Activated T-helper 1 cell treated with anti-CD3 and anti-CD28 coated beads, Interleukin-12 subunit alpha, Interleukin-12 subunit beta, Interleukin-2, Interleukin-4 antibody, amounts not matched to agents 30 ng/mL and 10 ng/mL and 1 ng/mL, durations not matched to agents 14 hours and 24 hours and 36 hours (primary cell): ENCODE measurements at regions of chr3 and their contacts with region 1.

Region 1: DNA sequence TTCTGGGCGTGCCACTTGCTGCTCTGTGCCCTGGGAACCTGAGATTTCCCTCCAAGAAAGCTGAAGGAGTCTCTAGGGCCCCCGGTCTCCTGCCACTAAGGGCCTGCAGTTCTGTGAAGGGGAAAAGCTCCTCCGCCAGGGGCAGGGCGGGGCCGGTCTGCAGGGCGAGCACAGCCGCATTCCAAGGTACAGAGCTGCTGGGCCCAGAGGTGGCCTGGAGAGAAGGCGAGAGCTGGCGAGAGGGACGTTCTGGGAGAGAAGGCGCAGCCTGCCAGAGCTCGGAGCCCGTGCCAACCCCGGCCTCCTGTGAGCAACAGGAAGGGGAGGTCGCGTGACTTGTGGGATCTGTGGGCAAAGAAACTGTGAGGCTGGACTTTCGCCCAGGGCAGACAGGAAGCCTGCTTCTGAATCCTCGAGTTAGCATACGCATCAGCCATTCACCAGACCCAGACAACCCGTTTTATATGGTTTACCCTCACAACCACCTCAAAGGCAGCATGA is 500.4 kb downstream of the SHQ1 start:
- DNase-seq: no peak
- H3K4me3 Mint-ChIP-seq: no peak overlapping the region
- H3K27ac Mint-ChIP-seq: no peak overlapping the region
- H3K4me1 Mint-ChIP-seq: peaks cover 52% of the 10 kb centered on the region
- H3K27me3 Mint-ChIP-seq: no peaks in the 10 kb centered on the region

Region 2: GRCh38 chr3:72100601-72101187 is 247.2 kb before region 1 on chr3:
- intact Hi-C with region 1: loop called (anchors 10 kb)
- DNase-seq: peak; percentile 95
- H3K4me3 Mint-ChIP-seq: peak overlapping the region; percentile 78
- H3K27ac Mint-ChIP-seq: peak overlapping the region; percentile 88
- H3K4me1 Mint-ChIP-seq: peaks cover 32% of the 10 kb centered on the region
- H3K27me3 Mint-ChIP-seq: peaks cover 5% of the 10 kb centered on the region

Region 3: GRCh38 chr3:72303926-72304325 is 43.9 kb before region 1 on chr3:
- intact Hi-C with region 1: no loop called
- DNase-seq: no peak
- H3K4me3 Mint-ChIP-seq: no peak overlapping the region
- H3K27ac Mint-ChIP-seq: no peak overlapping the region
- H3K4me1 Mint-ChIP-seq: no peaks in the 10 kb centered on the region
- H3K27me3 Mint-ChIP-seq: peaks cover 3% of the 10 kb centered on the region